ENCODE measurements at regions of chr10 and their contacts with region 1.

Region 1: DNA sequence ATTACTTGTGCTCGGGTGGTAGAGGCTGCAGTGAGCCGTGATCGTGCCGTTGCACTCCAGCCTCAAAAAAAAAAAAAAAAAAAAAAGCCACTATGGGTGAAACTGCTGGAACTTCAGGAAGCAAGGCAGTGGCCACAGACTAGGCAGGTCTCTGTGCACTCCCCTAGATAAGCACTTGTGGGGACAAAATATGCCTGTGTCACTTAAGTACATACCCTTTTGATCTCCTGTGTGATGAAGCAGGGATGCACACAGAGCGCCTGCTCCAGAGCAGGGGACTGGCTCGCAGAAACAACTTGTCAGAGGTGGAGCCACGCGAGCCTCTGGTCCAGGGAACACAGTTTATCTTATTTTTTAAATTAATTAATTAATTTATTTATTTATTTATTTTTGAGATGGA is 42.9 kb upstream of the PSAP start:
- DNase-seq: no peak
- H3K4me3 ChIP-seq: no peak overlapping the region
- H3K27me3 ChIP-seq: no peaks in the 10 kb centered on the region
- CTCF ChIP-seq: no peak

Region 2: DNA sequence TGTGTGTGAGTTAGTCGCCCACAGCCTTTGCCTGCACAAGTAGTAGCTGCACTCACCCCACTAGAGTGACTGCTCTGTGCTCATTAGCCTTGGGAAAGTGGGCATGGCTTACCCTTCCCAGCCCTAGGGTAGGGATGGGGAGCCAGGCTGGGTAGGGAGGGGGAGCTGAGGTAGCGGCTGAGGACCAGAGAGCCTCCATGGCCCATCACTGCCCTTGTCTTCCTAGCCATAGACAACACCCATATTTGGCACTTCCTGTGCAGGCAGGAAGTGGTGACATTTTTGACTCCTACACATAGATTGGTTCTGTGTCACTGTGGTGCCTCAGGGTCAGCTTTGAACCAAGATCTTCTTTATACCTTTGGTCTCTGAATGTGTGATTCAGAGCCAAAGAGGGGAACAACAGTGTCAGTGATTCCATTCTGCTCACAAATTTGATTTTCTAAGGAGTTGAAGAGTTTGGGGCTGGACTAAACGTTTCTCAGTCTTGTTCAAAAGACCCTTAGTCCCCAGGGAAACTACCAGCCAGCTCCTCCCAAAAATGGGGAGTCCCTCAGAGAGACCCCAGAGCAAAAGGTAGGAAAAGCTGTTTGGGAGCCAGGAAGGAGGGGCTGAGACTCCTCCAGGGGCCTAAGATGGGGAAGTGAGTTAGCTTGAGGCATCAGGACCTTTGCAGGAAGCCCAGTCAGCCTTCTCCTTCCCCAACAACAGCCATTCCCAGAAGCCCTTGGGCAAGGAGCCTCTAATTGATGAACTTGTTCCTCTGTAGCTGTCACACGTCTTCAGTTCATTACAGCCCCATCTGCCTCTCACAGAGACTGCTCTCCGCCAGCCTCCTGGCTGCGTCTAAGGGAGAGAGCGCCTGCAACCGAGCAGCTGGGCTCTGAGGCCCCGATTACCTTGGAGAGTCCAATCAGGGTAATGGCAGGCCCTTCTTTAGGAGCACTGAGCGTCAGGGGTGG is 362.2 kb before region 1 on chr10:
- CTCF ChIA-PET with region 1: no interaction called
- POLR2A ChIA-PET with region 1: no interaction called
- DNase-seq: no peak
- H3K4me3 ChIP-seq: no peak overlapping the region
- H3K27me3 ChIP-seq: peaks cover 4% of the 10 kb centered on the region
- CTCF ChIP-seq: no peak

Region 3: GRCh38 chr10:71771821-71772617 is 121.9 kb before region 1 on chr10:
- CTCF ChIA-PET with region 1: interaction called, 18 read pairs
- POLR2A ChIA-PET with region 1: no interaction called
- DNase-seq: peak; percentile 39
- H3K4me3 ChIP-seq: peak overlapping the region; percentile 85
- H3K27me3 ChIP-seq: no peaks in the 10 kb centered on the region
- CTCF ChIP-seq: no peak

Region 4: GRCh38 chr10:71835671-71836595 is 58.0 kb before region 1 on chr10:
- CTCF ChIA-PET with region 1: interaction called, 40 read pairs
- POLR2A ChIA-PET with region 1: no interaction called
- DNase-seq: peak; percentile 67
- H3K4me3 ChIP-seq: no peak overlapping the region
- H3K27me3 ChIP-seq: no peaks in the 10 kb centered on the region
- CTCF ChIP-seq: no peak

Region 5: DNA sequence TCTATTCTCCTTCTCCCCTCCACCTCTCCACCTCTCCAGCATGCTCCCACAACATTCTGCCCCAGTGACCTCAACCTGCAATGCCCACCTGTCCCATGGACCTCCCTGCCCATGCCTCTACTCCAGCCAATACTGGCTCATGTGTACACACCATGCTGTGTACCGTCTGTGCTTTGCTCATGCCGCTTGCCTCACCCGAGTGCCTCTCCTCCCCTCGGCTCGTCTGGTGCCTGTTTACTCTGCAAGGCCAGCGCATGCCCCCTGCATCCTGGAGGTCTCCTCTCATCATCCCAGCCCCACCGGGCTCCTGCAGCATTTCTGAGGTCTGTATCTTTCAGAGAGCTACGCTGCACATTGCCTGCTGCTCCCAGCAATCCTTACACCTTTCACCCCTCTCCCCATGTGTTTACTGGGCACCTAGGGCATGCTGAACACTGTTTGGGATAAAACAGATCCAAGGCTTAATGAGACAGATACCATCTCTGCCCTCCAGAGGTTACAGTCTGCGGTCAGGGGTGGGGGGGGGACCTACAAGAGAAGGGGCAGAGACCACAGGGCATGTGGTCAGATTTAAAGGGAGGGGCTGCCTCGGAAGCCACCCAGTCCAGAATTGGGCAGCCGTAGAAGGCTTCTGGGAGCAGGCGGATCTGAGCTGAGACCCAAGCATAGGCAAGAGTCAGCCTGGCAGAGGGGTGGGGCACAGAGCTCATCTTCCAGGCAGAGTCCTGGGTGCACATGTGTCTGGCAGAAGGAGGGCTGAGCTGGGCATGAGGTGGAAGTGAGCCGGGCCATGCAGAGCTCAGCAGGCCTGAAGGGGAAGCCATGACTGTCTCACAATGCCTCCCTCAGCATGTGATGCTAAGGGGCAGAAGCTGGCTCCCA is 13.3 kb before region 1 on chr10:
- CTCF ChIA-PET with region 1: interaction called, 16 read pairs
- POLR2A ChIA-PET with region 1: no interaction called
- DNase-seq: no peak
- H3K4me3 ChIP-seq: no peak overlapping the region
- H3K27me3 ChIP-seq: peaks cover 3% of the 10 kb centered on the region
- CTCF ChIP-seq: no peak

Region 6: DNA sequence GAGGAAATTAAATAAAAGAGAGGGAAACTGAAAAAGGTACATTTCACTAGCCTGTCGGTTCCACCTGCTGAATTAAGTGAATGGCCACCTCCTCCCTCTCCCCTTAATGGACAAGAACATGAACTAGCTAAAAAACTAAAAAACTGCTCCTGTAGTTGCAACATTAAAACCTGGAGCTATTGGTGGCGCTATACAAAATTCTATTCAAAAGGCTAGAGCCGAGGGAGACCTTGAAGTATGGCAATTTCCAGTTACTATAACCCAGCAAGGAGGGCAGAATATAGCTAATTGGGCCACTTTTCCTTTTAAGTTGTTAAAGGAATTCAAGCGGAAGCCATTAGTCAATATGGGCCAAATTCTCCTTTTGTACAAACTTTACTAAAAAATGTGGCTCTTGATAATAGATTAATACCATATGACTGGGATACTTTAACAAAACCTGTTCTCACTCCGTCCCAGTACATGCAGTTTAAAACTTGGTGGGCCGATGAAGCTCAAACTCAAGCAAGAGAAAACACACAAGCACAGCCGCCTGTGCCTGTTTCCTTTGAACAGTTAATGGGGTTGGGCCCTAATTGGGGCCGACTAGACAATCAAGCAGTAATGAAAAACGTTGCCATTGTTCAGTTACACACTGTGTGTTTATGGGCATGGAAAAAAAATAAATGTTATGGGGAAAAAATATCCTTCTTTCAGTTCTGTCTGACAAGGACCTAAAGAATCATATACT is 63.8 kb after region 1 on chr10:
- CTCF ChIA-PET with region 1: interaction called, 10 read pairs
- POLR2A ChIA-PET with region 1: no interaction called
- DNase-seq: no peak
- H3K4me3 ChIP-seq: no peak overlapping the region
- H3K27me3 ChIP-seq: no peaks in the 10 kb centered on the region
- CTCF ChIP-seq: peak; percentile 40

Region 7: DNA sequence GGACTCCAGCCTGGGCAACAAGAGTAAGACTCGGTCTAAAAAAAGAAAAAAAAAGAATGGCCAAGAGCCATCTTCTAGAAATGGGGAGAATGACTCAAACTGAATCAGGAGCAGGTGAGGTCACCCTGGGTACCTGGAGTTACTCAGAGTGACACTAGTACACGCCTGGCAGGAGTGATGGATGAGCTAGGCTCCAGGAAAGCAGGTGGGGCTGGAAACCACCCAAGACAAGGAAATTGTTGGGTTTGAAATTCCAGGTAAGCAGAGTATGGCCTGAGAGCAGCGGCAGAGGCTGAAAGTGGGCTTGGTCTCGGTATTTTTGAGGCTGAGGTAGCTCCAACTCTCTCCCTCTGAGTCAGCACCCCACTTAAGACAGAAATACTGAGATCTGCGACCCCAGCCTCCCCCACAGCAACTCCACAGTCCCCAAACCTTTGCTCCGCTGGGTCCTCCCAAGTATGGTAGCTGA is 398.3 kb after region 1 on chr10:
- CTCF ChIA-PET with region 1: no interaction called
- POLR2A ChIA-PET with region 1: no interaction called
- DNase-seq: no peak
- H3K4me3 ChIP-seq: no peak overlapping the region
- H3K27me3 ChIP-seq: no peaks in the 10 kb centered on the region
- CTCF ChIP-seq: no peak

Measured in BJ (cell line).